ENCODE measurements at regions of chr4 and their contacts with region 1.

Region 1: GRCh38 chr4:87235020-87235671 is 14.7 kb upstream of the KLHL8 start:
- DNase-seq: no peak
- ATAC-seq: peak; percentile 32
- H3K4me3 ChIP-seq: no peak overlapping the region
- H3K4me1 ChIP-seq: no peaks in the 10 kb centered on the region
- CTCF ChIP-seq: no peak

Region 2: GRCh38 chr4:86927843-86928395 is 307.2 kb before region 1 on chr4:
- intact Hi-C with region 1: loop called in 1 of 2 experiments (anchors 10 kb)
- DNase-seq: no peak
- ATAC-seq: peak; percentile 48
- H3K4me3 ChIP-seq: no peak overlapping the region
- H3K4me1 ChIP-seq: no peaks in the 10 kb centered on the region
- CTCF ChIP-seq: no peak

Region 3: GRCh38 chr4:87150498-87151261 is 84.5 kb before region 1 on chr4:
- intact Hi-C with region 1: loop called (anchors 5 kb)
- DNase-seq: peak in 1 of 3 donors; percentile 91
- ATAC-seq: peak; percentile 90
- H3K4me3 ChIP-seq: no peak overlapping the region
- H3K4me1 ChIP-seq: peaks cover 7% of the 10 kb centered on the region
- CTCF ChIP-seq: peak; percentile 83

Measured in mucosa of descending colon (tissue), 3 donors.